Activated B cell treated with CpG ODN at 0.5 μM for 24 hours (primary cell): ENCODE measurements at regions of chr1 and their contacts with region 1.

Region 1: DNA sequence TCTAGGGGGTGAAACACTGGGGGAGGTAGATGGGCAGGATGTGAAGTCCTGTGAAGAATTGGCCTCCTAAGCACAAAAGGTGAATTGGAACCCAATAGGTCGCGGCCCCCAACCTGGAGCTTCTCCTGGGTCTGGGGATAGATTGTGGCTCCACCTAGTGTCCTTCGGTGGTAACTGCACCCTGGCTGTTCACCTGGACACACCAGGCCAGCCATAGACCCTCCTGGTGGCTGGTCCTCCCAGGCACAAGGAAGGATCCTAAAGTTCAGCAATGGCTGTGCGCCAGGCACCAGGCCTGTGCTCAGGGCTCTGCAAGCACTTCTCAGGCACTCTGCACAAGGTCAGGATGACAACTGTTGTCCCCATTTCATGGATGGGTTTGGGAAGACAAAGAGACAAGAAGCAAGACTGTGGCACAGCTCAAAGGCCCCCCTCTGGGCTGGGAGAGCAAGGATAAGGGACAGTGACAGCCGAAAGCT is 13.5 kb downstream of the ESPN start:
- DNase-seq: peak; percentile 57
- ATAC-seq: peak; percentile 59
- H3K4me3 Mint-ChIP-seq: no peak overlapping the region
- H3K27ac Mint-ChIP-seq: no peak overlapping the region
- H3K4me1 Mint-ChIP-seq: peaks cover 7% of the 10 kb centered on the region
- H3K27me3 Mint-ChIP-seq: peaks cover 44% of the 10 kb centered on the region
- CTCF ChIP-seq: peak; percentile 68

Region 2: DNA sequence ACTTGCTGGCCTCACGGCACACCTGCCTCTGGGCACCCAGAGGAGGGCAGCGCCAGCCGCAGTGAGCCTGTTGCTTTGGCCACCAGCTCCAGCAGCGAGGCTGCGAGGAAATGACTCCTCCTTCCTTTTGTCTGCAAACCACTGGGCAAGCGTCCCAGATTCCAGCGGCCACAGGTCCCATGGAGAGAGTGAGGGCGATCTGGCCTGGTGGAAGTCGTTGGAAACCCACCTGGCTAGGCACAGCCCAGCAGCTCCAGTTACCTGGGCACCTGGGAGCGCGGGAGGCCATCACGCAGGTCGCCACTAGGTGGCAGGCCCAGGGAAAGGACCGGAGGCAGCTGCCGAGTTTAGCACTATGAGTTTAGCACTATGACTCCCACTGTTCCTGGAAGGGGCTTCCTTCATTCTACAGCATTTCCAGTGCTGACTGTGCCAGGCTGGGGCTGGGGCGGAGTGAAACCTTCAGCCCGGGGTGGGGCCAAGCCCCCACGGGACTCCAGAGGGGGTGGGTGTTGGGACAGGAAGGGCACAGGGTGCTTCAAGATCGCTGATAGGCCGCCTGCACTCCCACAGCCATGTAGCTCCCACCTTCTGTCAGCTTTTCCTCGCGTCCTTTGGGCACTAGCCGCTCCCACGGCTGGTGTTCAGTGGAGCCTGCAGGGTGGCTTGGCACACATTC is 14.6 kb before region 1 on chr1:
- CTCF ChIA-PET with region 1: interaction called, 26 read pairs
- POLR2A ChIA-PET with region 1: no interaction called
- intact Hi-C with region 1: loop called (anchors 1 kb)
- DNase-seq: peak; percentile 55
- ATAC-seq: peak; percentile 77
- H3K4me3 Mint-ChIP-seq: peak overlapping the region; percentile 55
- H3K27ac Mint-ChIP-seq: no peak overlapping the region
- H3K4me1 Mint-ChIP-seq: peaks cover 15% of the 10 kb centered on the region
- H3K27me3 Mint-ChIP-seq: peaks cover 50% of the 10 kb centered on the region
- CTCF ChIP-seq: peak; percentile 46